Activated naive CD4-positive, alpha-beta T cell treated with anti-CD3 and anti-CD28 coated beads for 36 hours (primary cell): ENCODE measurements at regions of chr18 and their contacts with region 1.

Region 1: GRCh38 chr18:58043491-58044379 is at the start of gene NEDD4L:
- DNase-seq: peak; percentile 89
- H3K4me3 Mint-ChIP-seq: peak within 1 kb of the TSS; percentile 85
- H3K27ac Mint-ChIP-seq: no peak within 1 kb of the TSS
- H3K4me1 Mint-ChIP-seq: peaks cover 25% of the 10 kb centered on the region
- H3K27me3 Mint-ChIP-seq: peaks cover 10% of the 10 kb centered on the region
- total RNA-seq, gene NEDD4L: 5.3 to 5.6 TPM

Region 2: DNA sequence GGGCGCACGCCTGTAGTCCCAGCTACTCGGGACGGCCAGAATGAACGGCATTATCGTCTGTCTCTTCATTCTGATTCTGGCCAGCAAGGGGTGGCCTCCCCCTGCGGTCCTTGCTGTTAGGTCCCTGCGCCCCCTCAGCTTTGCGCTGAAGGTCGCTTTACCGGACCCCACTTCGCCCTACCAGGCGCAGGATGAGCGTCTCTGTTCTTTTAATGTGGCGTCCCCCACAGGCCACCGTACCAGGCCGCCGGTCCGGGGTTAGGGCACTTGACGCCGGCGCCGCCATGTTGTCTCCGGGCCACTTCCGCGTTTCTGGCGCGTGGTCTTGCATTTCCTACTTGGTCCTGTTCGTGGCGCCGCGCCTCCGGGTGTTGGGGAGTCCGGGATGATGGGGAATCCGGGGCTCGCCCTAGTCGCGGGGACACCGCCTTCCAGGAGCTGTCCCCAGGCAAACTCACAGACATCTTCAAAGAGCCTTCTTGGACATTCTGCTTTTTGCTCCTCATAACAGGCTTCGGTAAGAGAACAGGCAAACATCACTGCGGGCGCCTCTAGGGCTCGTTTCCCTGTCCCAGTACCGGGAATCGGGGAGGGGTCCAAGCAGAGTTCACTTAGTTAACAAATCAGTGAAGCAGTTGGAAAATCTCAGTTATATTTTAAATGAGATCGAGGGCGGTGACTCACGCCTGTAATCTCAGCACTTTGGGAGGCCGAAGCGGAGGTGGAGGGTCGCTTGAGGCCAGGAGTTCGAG is 413.6 kb before region 1 on chr18:
- CTCF ChIA-PET with region 1: interaction called, 3 read pairs
- intact Hi-C with region 1: loop called (anchors 1 kb)
- DNase-seq: peak; percentile 97
- H3K4me3 Mint-ChIP-seq: peak overlapping the region; percentile 95
- H3K27ac Mint-ChIP-seq: peak overlapping the region; percentile 92
- H3K4me1 Mint-ChIP-seq: peaks cover 14% of the 10 kb centered on the region
- H3K27me3 Mint-ChIP-seq: no peaks in the 10 kb centered on the region

Region 3: GRCh38 chr18:58005885-58006523 is 37.7 kb before region 1 on chr18:
- CTCF ChIA-PET with region 1: no interaction called
- intact Hi-C with region 1: loop called (anchors 1 kb)
- DNase-seq: peak; percentile 6
- H3K4me3 Mint-ChIP-seq: no peak overlapping the region
- H3K27ac Mint-ChIP-seq: no peak overlapping the region
- H3K4me1 Mint-ChIP-seq: no peaks in the 10 kb centered on the region
- H3K27me3 Mint-ChIP-seq: peaks cover 24% of the 10 kb centered on the region

Region 4: DNA sequence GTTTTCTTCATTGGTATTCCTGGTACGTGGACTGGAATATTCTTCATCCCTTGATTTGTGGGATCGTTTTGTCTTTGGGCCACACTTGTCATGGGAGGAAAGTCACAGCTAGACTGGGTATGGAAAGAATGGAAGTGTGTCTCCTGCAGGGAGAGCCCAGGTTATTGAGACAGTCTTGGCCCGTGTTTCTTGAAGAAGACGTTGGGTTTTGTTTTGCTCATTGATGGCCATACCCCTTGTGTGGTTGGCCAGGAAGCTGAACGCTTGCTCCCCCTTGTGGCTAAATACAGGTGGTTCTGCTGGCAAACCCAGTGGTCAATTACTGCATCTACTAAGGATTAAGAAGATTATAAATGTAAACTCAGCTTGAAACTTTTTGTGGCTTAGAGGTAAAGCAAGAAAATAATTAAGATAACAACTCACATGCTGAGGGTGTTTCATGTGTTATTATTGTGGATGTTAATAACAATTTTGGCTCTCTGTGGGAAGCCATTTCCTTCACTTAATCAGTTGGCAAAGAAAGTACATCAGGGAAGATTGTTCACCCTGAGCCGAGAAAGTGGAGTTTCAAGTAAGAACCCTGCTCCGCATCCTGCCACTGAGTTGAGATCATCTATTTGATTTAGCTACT is 92.1 kb after region 1 on chr18:
- CTCF ChIA-PET with region 1: interaction called, 15 read pairs
- intact Hi-C with region 1: loop called (anchors 1 kb)
- DNase-seq: peak; percentile 74
- H3K4me3 Mint-ChIP-seq: no peak overlapping the region
- H3K27ac Mint-ChIP-seq: no peak overlapping the region
- H3K4me1 Mint-ChIP-seq: peaks cover 7% of the 10 kb centered on the region
- H3K27me3 Mint-ChIP-seq: peaks cover 9% of the 10 kb centered on the region

Region 5: GRCh38 chr18:58493516-58494253 is 449.9 kb after region 1 on chr18:
- CTCF ChIA-PET with region 1: interaction called, 3 read pairs
- intact Hi-C with region 1: loop called (anchors 1 kb)
- DNase-seq: peak; percentile 90
- H3K4me3 Mint-ChIP-seq: peak overlapping the region; percentile 17
- H3K27ac Mint-ChIP-seq: no peak overlapping the region
- H3K4me1 Mint-ChIP-seq: peaks cover 11% of the 10 kb centered on the region
- H3K27me3 Mint-ChIP-seq: peaks cover 22% of the 10 kb centered on the region